ENCODE measurements at regions of chr15 and their contacts with region 1.

Region 1: GRCh38 chr15:72272213-72273002 is at the start of gene PARP6:
- DNase-seq: peak; percentile 98
- H3K4me3 ChIP-seq: peak within 1 kb of the TSS; percentile 83 to 93 (median 89)
- H3K27ac ChIP-seq: peak within 1 kb of the TSS; percentile 92 to 96
- H3K4me1 ChIP-seq: peaks cover 0 to 8% of the 10 kb centered on the region in 2 donors
- H3K27me3 ChIP-seq: no peaks in the 10 kb centered on the region
- CTCF ChIP-seq: peak; percentile 45 to 74 (median 62)
- POLR2A ChIP-seq: no peak
- total RNA-seq, gene PARP6: 63.9 to 90.4 (median 65.8) TPM

Region 2: GRCh38 chr15:72117486-72118399 is 154.7 kb before region 1 on chr15 and contains the start of gene MYO9A:
- intact Hi-C with region 1: no loop called
- DNase-seq: peak; percentile 97 to 100
- H3K4me3 ChIP-seq: peak within 1 kb of the TSS; percentile 75 to 94 (median 83)
- H3K27ac ChIP-seq: peak within 1 kb of the TSS; percentile 98
- H3K4me1 ChIP-seq: no peaks in the 10 kb centered on the region
- H3K27me3 ChIP-seq: no peaks in the 10 kb centered on the region
- CTCF ChIP-seq: peak in 1 of 3 donors; percentile 11
- POLR2A ChIP-seq: peak; percentile 33
- total RNA-seq, gene MYO9A: 64.2 to 128 (median 86.5) TPM

Region 3: GRCh38 chr15:72199711-72200212 is 72.6 kb before region 1 on chr15:
- intact Hi-C with region 1: loop called (anchors 10 kb)
- DNase-seq: peak; percentile 76 to 81
- H3K4me3 ChIP-seq: no peak overlapping the region
- H3K27ac ChIP-seq: peak overlapping the region; percentile 17 to 30
- H3K4me1 ChIP-seq: peaks cover 6 to 12% of the 10 kb centered on the region in 2 donors
- H3K27me3 ChIP-seq: no peaks in the 10 kb centered on the region
- CTCF ChIP-seq: peak; percentile 80 to 93 (median 86)
- POLR2A ChIP-seq: no peak